Panc1 (cell line): ENCODE measurements at regions of chr17 and their contacts with region 1.

Region 1: GRCh38 chr17:35808962-35809854 is at the start of gene TAF15:
- DNase-seq: peak; percentile 92
- ATAC-seq: peak; percentile 97
- H3K4me3 ChIP-seq: peak within 1 kb of the TSS; percentile 89 to 99
- H3K27ac ChIP-seq: peak within 1 kb of the TSS; percentile 98
- H3K4me1 ChIP-seq: peaks cover 22% of the 10 kb centered on the region
- H3K27me3 ChIP-seq: no peaks in the 10 kb centered on the region
- CTCF ChIP-seq: peak; percentile 90
- total RNA-seq, gene TAF15: 249 TPM

Region 2: DNA sequence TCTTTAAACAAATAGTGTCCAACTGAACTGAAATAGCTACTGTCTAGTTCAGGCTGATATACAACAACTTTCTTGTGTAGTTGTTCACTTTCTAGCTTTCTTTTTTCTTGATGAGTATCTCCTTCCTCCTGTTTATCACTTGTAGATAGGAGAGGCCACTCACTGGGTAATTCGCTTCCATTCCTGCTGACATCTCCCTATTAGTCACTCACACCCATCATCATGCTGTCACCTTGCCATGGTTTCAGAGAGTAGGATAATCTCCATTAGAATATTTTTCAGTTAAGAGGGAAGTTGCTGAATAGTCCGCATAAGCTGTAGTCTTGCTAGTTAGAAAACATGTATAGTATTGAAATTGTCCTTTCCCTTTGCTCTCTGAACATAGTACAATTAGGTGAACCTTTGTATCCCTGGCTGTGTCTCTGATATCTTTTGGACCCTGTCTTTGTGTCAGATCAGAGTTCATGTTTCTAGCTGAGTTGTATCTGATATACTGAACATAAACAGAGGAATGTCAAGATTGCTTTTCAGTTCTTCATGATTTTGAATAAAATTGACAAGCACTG is 142.2 kb before region 1 on chr17:
- CTCF ChIA-PET with region 1: no interaction called
- POLR2A ChIA-PET with region 1: interaction called, 14 read pairs
- in situ Hi-C with region 1: no loop called
- intact Hi-C with region 1: no loop called
- DNase-seq: no peak
- ATAC-seq: no peak
- H3K4me3 ChIP-seq: no peak overlapping the region
- H3K27ac ChIP-seq: no peak overlapping the region
- H3K4me1 ChIP-seq: no peaks in the 10 kb centered on the region
- H3K27me3 ChIP-seq: no peaks in the 10 kb centered on the region
- CTCF ChIP-seq: no peak

Region 3: GRCh38 chr17:35752945-35753764 is 56.1 kb before region 1 on chr17 and contains the start of gene GAS2L2:
- CTCF ChIA-PET with region 1: interaction called, 6 read pairs
- POLR2A ChIA-PET with region 1: interaction called, 10 read pairs
- in situ Hi-C with region 1: no loop called
- intact Hi-C with region 1: no loop called
- DNase-seq: no peak
- ATAC-seq: peak; percentile 8; the same call in 1 of the 2 replicates
- H3K4me3 ChIP-seq: no peak within 1 kb of the TSS
- H3K27ac ChIP-seq: no peak within 1 kb of the TSS
- H3K4me1 ChIP-seq: peaks cover 8% of the 10 kb centered on the region
- H3K27me3 ChIP-seq: peaks cover 4% of the 10 kb centered on the region
- CTCF ChIP-seq: no peak
- total RNA-seq, gene GAS2L2: not detected

Region 4: DNA sequence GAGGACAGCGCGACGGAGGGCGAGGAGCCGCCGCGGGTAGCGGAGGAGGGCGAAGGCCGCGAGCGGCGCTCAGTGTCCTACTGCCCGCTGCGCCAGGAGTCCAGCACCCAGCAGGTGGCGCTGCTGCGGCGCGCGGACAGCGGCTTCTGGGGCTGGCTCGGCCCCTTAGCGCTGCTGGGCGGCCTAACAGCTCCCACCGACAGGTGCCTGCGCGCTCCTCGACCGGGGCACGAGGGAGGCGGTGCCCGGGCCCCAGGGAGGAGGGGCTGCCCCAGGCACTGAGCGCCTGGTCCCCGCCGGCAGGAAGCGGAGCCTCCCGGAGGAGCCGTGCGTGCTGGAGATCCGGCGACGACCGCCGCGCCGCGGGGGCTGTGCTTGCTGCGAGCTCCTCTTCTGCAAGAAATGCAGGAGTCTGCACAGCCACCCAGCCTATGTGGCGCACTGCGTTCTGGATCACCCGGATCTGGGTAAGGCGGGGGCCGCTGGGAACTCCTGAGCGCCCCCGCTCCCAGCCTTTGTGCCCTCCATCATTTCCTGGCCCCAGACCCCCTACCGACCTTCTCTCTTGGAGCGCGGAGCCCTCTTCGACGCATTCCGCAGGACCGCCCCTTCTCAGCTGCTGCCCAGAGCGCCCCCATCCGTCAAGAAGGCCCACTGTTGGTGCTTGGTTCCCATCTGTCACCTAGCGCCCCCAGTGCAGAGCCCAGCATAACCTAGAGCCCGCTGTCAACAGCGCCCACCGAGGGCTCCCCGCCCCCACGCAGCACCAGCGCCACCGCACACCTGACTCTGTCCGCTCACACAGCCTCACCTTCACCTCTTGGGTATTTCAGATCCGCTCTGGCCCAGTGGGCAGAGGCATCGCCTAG is 44.9 kb before region 1 on chr17:
- CTCF ChIA-PET with region 1: interaction called, 37 read pairs
- POLR2A ChIA-PET with region 1: interaction called, 3 read pairs
- in situ Hi-C with region 1: no loop called
- intact Hi-C with region 1: loop called (anchors 1 kb)
- DNase-seq: peak; percentile 43
- ATAC-seq: peak; percentile 98
- H3K4me3 ChIP-seq: peak overlapping the region; percentile 46 to 64
- H3K27ac ChIP-seq: no peak overlapping the region
- H3K4me1 ChIP-seq: peaks cover 4% of the 10 kb centered on the region; the same call in 1 of the 2 replicates
- H3K27me3 ChIP-seq: peaks cover 3% of the 10 kb centered on the region; the same call in 1 of the 2 replicates
- CTCF ChIP-seq: peak; percentile 97

Region 5: DNA sequence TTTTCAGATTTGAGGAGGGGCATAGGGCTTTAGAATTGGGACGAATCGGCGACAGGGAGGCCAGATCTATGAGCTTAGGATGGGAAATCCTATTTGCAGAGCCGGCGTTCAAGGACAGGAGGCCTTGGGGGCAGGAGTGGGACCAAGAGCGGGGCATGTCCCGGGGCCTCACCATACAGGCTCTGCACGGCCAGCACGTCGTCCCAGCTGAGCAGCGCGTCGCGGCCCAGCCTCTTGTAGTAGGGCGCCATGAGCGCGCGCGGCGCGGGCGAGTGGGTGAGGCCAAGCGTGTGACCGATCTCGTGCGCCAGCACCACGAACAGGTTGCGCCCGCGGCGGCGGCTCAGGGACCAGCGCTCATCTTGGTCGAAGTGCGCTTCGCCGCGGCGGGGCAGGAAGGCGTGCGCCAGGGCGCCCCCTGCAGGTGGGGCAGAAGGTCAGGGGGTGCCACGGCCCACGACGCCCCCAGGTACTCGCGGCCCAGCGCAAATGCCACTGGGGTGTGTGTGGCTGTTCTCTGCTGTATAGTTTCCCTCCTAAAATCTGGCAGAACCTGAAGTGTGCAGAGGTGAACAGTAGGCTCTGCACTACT is 39.2 kb before region 1 on chr17:
- CTCF ChIA-PET with region 1: interaction called, 35 read pairs
- POLR2A ChIA-PET with region 1: no interaction called
- in situ Hi-C with region 1: no loop called
- intact Hi-C with region 1: loop called (anchors 1 kb)
- DNase-seq: no peak
- ATAC-seq: no peak
- H3K4me3 ChIP-seq: no peak overlapping the region
- H3K27ac ChIP-seq: no peak overlapping the region
- H3K4me1 ChIP-seq: peaks cover 8% of the 10 kb centered on the region; the same call in 1 of the 2 replicates
- H3K27me3 ChIP-seq: peaks cover 3% of the 10 kb centered on the region; the same call in 1 of the 2 replicates
- CTCF ChIP-seq: peak; percentile 77; the same call in 1 of the 2 replicates

Region 6: DNA sequence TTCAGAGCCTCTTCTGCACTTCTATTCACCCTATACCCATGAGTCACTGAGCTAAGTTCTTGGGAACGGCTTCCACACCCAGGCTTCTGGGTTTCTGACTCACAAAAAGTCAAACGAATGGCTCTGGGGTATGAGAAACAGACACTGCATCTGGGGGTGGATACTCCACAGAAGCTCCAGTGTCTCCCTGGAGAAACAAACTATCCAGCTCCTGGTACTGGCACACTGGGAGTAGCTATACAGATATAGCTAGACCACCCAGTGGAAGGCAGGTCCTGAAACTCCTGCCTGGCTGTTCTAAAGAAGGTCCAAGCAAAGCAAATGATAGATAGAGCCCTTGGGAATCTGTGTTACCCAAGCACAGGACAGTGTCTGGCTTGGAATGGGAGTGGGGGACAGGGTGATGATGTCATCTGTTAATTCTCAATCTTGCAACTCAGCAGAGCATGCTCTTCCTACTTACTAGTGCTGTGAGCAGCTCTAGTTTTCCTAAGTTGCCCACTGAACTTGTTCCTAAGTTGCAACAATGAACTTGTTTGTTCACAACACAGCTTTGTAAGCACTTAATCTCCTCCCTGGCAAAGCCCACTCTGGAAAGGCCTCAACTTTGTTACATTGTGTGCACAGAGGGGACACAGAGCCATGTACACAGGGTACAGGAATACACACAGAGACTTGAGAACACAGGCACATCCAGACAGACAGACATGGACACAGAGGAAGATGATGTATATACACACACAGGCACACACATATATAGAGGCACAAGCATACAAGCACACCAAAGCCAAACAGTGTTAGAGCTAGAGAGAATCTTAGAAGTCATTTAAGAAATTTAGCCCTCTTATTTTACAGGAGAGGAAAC is 20.5 kb before region 1 on chr17:
- CTCF ChIA-PET with region 1: interaction called, 9 read pairs
- POLR2A ChIA-PET with region 1: interaction called, 18 read pairs
- in situ Hi-C with region 1: no loop called
- intact Hi-C with region 1: no loop called
- DNase-seq: no peak
- ATAC-seq: peak; percentile 35; the same call in 1 of the 2 replicates
- H3K4me3 ChIP-seq: no peak overlapping the region
- H3K27ac ChIP-seq: 0 out of 2 replicates have a peak overlapping the region, but pooled peaks have one; percentile 10
- H3K4me1 ChIP-seq: peaks cover 27% of the 10 kb centered on the region
- H3K27me3 ChIP-seq: no peaks in the 10 kb centered on the region
- CTCF ChIP-seq: no peak

Region 7: DNA sequence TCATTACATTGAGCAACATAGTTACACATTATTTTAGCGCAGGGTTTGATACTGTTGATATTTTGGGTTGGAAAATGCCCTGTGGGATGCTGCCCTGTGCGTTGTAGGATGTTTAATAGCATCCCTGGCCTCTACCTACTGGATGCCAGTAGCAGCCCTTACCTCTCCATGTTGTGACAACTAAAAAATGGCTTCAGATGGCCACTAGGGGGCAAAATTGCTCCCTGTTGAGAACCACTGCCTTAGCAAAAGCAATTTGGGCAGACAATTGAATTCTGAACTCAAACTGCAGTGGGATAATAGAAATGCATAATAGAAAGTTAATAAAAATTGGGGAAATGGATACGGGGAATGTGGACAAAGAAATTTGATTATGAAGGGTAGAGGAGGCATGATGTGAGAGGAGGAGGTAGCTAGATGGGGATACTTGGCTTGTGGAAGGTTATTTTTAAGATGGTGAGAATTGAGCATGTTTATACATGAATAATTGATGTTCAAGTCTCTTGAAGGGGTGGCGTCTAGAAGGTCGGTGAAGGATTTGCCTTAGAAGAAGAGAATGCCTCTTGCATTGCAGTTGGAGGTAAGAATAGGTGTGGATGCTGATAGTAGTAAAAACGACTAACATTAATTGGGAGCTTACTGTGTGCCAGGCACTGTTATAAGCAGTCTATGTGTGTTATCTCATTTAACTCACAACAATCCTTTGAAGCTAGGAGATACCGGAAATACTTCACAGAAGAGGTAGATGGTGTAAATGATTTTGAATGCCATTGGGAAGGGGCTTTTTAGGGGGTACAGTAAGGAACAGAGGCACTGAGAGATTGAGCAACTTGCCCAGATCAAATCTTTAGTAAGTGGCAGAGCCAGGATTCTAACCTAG is 40.5 kb after region 1 on chr17:
- CTCF ChIA-PET with region 1: no interaction called
- POLR2A ChIA-PET with region 1: interaction called, 10 read pairs
- in situ Hi-C with region 1: no loop called
- intact Hi-C with region 1: no loop called
- DNase-seq: peak; percentile 28
- ATAC-seq: peak; percentile 89
- H3K4me3 ChIP-seq: no peak overlapping the region
- H3K27ac ChIP-seq: no peak overlapping the region
- H3K4me1 ChIP-seq: no peaks in the 10 kb centered on the region
- H3K27me3 ChIP-seq: no peaks in the 10 kb centered on the region
- CTCF ChIP-seq: peak; percentile 85